Cardiac septum (tissue), 1 donor: ENCODE measurements at regions of chr6 and their contacts with region 1.

Region 1: GRCh38 chr6:170129691-170130171 is 161.1 kb downstream of the DLL1 start:
- DNase-seq: peak; percentile 82

Region 2: DNA sequence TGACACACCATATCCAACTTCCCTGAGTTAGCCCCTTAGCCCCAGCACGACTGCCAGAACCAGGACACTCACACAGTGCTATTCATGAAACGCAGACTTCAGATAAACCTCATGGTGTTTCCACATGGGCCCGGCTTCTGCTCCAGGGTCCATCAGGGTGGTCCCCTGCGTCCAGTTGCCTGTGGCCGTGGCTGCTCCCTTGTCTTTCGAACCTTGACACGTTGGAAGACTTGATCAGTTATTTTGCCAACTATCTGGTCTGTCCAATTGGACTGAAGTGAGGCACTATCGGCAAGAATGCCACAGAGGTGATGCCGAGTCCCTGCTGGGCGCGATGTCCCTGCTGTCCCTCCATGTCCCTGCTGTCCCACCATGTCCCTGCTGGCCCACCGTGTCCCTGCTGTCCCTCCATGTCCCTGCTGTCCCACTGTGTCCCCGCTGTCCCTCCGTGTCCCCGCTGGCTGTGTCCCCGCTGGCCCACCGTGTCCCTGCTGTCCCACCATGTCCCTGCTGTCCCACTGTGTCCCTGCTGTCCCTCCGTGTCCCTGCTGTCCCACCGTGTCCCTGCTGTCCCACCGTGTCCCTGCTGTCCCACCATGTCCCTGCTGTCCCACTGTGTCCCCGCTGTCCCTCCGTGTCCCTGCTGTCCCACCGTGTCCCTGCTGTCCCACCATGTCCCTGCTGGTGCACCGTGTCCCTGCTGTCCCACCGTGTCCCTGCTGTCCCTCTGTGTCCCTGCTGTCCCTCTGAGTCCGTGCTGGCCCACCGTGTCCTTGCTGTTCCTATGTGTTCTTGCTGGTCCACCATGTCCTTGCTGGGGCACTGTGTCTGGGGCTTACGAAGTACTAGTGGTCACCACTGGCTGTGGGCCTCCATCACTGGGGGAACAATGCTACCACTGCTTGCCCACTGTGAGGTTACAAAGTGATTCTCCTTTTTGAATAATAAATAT is 90.3 kb before region 1 on chr6:
- intact Hi-C with region 1: loop called (anchors 5 kb)
- DNase-seq: peak; percentile 72